Dorsolateral prefrontal cortex (tissue), 120 donors: ENCODE measurements at regions of chr5 and their contacts with region 1.

Region 1: GRCh38 chr5:150946351-150946905 is 41.6 kb upstream of the ZNF300 start:
- DNase-seq: peak; percentile 64 to 91 (median 76)
- H3K4me3 ChIP-seq: peak overlapping the region; percentile 31 to 73 (median 56)
- H3K27ac ChIP-seq: peak overlapping the region in 55 of 59 donors; percentile 2 to 87 (median 71)
- H3K27me3 ChIP-seq: peaks cover 0 to 2% (median 0%) of the 10 kb centered on the region in 45 donors
- CTCF ChIP-seq: peak in 2 of 56 donors; percentile 8 to 13

Region 2: DNA sequence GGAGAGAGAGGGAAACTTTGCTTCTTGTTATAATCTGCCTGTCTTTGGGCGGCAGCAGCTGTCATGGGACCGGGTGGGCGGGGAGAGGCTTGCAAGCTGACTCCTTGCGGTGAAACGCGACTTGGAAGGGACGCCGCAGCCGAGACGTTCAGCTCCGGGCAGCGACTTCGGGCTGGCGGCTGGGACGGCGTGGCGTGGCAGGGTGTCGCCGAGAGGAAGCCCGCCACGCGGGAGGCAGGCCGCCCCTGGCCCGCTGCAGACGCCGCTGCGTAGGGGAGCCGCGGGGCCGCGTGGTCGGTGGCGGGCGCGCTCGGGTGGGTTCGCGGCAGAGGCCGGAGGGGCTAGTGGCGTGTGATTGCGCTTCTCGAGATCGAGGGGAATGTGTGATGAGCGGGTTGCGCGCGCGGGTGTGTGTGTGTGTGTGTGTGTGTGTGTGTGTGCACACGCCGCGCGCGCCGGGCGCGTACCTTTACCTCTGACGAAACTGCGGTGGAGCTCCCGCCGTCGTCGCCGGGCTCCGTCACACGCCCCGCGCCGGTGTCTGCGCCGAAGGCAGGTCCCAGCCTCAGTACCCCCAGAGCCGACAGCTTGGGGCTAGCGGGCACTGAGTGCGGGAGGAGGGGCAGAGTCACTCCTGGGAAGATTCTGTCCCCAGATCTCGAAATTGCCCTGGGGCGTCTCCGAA is 1214.6 kb before region 1 on chr5:
- intact Hi-C with region 1: no loop called
- DNase-seq: peak; percentile 42 to 84 (median 76)
- H3K4me3 ChIP-seq: peak overlapping the region; percentile 56 to 96 (median 82)
- H3K27ac ChIP-seq: peak overlapping the region in 53 of 59 donors; percentile 13 to 94 (median 81)
- H3K27me3 ChIP-seq: no peaks in the 10 kb centered on the region
- CTCF ChIP-seq: peak in 1 of 56 donors; percentile 15

Region 3: DNA sequence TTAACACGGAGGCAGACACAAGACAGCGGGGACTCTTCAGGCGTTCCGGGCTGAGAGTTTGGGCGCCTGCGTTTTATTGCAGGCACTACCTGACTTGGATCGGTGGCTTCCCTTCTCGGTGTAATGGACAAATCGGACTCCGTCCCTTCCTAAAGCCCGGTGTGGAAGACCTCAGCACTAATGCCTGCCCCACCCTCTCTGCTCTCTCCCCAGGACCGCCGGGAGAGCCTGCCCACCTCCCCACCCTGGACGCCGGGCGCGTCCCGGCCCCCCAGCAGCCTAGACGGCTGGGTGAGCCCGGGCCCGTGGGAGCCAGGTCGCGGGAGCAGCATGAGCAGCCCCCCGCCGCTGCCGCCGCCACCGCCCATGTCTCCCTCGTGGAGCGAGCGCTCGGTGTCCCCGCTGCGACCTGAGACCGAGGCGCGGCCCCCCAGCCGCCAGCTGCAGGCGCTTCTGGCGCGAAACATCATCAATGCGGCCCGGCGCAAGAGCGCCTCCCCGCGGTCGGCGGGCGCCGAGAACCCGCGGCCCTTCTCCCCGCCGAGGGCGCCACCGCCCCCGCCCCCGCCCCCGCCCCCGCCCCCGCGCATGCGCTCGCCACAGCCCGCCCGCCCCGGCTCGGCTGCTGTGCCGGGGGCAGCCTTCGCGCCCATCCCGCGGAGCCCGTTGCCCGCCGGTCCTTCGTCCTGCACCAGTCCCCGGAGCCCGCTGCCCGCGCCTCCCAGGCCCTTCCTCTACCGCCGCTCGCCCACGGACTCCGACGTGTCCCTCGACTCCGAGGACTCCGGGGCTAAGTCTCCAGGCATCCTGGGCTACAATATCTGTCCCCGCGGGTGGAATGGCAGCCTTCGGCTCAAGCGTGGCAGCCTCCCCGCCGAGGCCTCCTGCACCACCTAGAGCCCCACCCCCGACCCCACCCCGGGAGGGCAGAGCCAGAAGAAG is 290.0 kb before region 1 on chr5:
- intact Hi-C with region 1: no loop called
- DNase-seq: peak in 9 of 10 donors; percentile 49 to 84 (median 64)
- H3K4me3 ChIP-seq: peak overlapping the region; percentile 29 to 80 (median 65)
- H3K27ac ChIP-seq: peak overlapping the region in 36 of 59 donors; percentile 12 to 81 (median 58)
- H3K27me3 ChIP-seq: no peaks in the 10 kb centered on the region
- CTCF ChIP-seq: peak in 55 of 56 donors; percentile 44 to 96 (median 71)

Region 4: GRCh38 chr5:150758531-150759333 is 187.7 kb before region 1 on chr5 and contains the start of gene DCTN4:
- intact Hi-C with region 1: loop called in 1 of 2 experiments (anchors 10 kb)
- DNase-seq: peak; percentile 96 to 99 (median 97)
- H3K4me3 ChIP-seq: peak within 1 kb of the TSS; percentile 61 to 96 (median 79)
- H3K27ac ChIP-seq: peak within 1 kb of the TSS; percentile 92 to 100 (median 99)
- H3K27me3 ChIP-seq: no peaks in the 10 kb centered on the region
- CTCF ChIP-seq: peak in 26 of 56 donors; percentile 7 to 60 (median 24)
- total RNA-seq, gene DCTN4: 75.7 to 114 (median 94.9) TPM

Region 5: GRCh38 chr5:150904479-150905318 is 41.7 kb before region 1 on chr5 and contains the start of gene ZNF300:
- intact Hi-C with region 1: loop called (anchors 2 to 5 kb)
- DNase-seq: peak; percentile 79 to 94 (median 90)
- H3K4me3 ChIP-seq: peak within 1 kb of the TSS; percentile 33 to 79 (median 61)
- H3K27ac ChIP-seq: peak within 1 kb of the TSS in 57 of 59 donors; percentile 14 to 95 (median 85)
- H3K27me3 ChIP-seq: no peaks in the 10 kb centered on the region
- CTCF ChIP-seq: peak in 23 of 56 donors; percentile 10 to 48 (median 25)
- total RNA-seq, gene ZNF300: 0.96 to 7.3 (median 2.6) TPM